SK-N-SH (cell line): ENCODE measurements at regions of chr14 and their contacts with region 1.

Region 1: DNA sequence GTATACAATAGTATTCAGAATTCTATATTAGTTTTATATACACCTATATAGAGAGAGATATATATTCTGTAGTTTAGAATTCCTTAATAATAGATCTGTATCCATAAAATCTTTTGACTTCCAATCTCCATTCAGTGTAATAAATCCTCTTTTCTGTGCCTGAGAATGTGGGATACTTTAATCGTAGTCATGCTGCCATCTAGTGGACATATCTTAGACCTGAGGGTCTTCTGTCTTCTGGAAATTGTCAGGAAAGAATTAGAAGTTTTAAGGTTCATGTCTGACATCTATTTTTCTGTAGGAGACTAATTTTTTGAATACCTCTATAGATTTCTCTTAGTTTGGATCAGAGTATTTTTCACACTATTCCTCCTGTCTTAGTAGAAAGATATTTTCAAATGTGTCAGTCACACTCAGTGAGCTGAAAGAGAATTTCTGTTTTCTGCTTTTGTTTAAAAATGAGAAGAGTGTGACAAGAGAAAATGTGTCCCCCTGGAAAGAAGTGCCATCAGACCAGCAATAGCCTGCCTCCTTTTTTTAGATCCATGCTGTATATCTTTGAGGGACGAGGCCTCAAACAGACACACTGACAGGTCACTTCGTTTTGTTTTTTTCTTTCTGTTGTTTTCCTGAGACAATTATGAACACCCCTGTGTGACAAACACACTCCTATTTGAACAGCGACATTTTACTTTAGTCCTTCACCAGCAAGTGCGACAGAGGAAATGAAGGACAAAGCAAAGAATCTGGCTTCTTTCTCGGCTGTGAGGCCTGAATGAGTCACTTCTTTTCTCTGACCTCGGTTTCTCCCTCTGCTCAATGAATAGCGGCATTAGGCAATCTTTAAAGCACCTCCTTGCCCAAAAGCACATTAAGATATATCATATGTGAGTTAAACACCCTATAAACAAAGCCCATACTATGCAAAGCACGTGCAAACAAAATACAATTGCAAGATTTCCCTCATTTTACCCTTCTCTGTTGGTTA is 96.3 kb downstream of the GALC start:
- DNase-seq: peak; percentile 35
- H3K4me3 ChIP-seq: no peak overlapping the region
- H3K27ac ChIP-seq: no peak overlapping the region
- H3K4me1 ChIP-seq: no peaks in the 10 kb centered on the region; a peak in 1 of 4 replicates
- H3K27me3 ChIP-seq: no peaks in the 10 kb centered on the region
- CTCF ChIP-seq: peak; percentile 84
- EP300 ChIP-seq: no peak
- RAD21 ChIP-seq: peak; percentile 78

Region 2: DNA sequence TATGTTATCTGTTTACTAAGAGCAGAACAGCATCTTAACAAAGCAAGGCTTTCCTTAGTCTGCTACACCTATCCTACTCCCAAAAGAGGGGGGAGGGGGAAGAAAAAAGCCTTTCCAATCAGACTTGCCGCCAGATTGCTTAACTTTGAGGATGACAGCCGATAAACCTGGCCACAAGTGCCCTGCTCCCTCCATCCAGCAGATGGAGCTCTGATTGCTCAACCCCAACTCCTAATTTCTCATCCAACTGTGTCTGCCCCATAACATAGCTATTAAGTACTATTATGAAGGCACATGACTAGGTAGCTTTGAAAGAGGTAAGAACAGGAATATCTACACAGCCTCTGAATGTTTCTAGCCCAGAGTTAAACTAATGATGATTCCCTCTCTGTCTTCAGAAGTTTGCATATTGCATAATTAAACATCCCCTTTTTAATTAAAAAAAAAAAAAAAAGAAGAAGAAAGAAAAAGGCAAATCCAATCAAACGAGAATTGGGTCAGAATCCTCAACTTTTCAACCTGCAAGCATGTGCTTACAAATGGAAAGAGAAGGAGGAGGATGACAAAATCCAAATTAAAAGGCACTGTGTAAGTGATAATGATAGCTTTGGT is 151.1 kb before region 1 on chr14:
- CTCF ChIA-PET with region 1: interaction called, 53 read pairs
- POLR2A ChIA-PET with region 1: no interaction called
- DNase-seq: peak; percentile 52
- H3K4me3 ChIP-seq: no peak overlapping the region
- H3K27ac ChIP-seq: no peak overlapping the region
- H3K4me1 ChIP-seq: no peaks in the 10 kb centered on the region
- H3K27me3 ChIP-seq: no peaks in the 10 kb centered on the region
- CTCF ChIP-seq: peak; percentile 55
- EP300 ChIP-seq: no peak
- RAD21 ChIP-seq: peak; percentile 38

Region 3: GRCh38 chr14:87805315-87805723 is 91.4 kb before region 1 on chr14:
- CTCF ChIA-PET with region 1: interaction called, 69 read pairs
- POLR2A ChIA-PET with region 1: no interaction called
- DNase-seq: peak; percentile 41
- H3K4me3 ChIP-seq: no peak overlapping the region; a peak in 1 of 4 replicates
- H3K27ac ChIP-seq: no peak overlapping the region
- H3K4me1 ChIP-seq: no peaks in the 10 kb centered on the region
- H3K27me3 ChIP-seq: no peaks in the 10 kb centered on the region
- CTCF ChIP-seq: peak; percentile 59
- EP300 ChIP-seq: no peak
- RAD21 ChIP-seq: peak; percentile 51

Region 4: DNA sequence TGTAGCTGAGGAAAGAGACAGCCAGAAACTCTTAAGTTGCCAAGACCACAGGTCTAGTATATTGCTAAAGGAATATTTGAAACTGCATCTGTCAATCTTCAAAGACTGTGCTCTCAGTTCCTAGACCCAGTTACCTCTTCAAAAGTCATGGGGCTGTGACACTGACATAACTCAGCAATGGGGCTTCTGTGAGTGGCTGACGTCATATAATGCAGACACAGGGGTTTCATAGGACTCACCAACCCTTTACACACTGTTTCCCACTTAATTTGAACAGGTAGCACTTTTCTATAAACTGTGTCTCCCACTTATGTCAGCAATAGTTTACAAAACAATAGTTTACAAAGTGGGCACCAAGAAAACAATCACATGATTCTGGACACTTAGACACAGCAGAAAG is 62.1 kb before region 1 on chr14:
- CTCF ChIA-PET with region 1: no interaction called
- POLR2A ChIA-PET with region 1: no interaction called
- DNase-seq: no peak
- H3K4me3 ChIP-seq: no peak overlapping the region
- H3K27ac ChIP-seq: no peak overlapping the region
- H3K4me1 ChIP-seq: no peaks in the 10 kb centered on the region
- H3K27me3 ChIP-seq: no peaks in the 10 kb centered on the region
- CTCF ChIP-seq: no peak
- EP300 ChIP-seq: no peak
- RAD21 ChIP-seq: no peak

Region 5: DNA sequence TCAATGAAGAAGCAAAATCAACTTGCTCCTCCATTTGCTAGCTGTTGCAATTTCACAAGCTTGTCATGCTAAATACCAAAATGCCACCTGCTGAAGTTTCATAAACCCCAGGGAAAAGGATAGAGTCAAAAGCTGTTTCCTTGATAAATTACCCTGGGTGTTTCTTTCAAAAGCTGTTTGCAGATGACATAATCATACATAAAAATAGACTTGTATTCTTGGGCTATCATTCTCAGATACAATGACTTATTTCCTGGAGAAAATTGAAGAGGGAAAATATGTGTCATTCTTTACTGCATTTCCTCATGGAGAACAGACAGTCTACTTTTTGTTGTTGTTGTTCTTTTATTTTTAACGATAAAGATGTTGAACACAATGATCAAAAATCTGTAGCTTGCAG is 22.9 kb before region 1 on chr14:
- CTCF ChIA-PET with region 1: interaction called, 14 read pairs
- POLR2A ChIA-PET with region 1: no interaction called
- DNase-seq: no peak
- H3K4me3 ChIP-seq: no peak overlapping the region
- H3K27ac ChIP-seq: no peak overlapping the region
- H3K4me1 ChIP-seq: no peaks in the 10 kb centered on the region
- H3K27me3 ChIP-seq: no peaks in the 10 kb centered on the region
- CTCF ChIP-seq: no peak
- EP300 ChIP-seq: no peak
- RAD21 ChIP-seq: no peak

Region 6: DNA sequence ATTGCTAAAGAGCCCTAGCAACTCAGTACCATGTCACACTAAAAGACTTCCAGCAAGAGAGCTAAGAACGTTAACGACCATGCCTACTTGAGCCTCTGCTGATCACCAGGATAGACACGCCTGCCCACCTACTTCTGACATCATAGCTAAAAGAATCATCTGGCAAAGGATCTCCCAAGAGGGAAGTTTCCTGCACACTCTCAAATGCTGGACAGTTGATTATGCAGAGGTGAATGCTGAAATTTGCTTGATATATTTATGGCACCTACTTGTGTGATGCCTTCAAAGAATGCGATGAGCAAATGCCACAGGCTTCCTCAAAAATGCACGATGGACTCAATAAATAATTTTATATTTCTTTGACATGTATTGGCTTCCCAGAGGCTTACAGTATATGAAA is 17.3 kb before region 1 on chr14:
- CTCF ChIA-PET with region 1: interaction called, 14 read pairs
- POLR2A ChIA-PET with region 1: no interaction called
- DNase-seq: no peak
- H3K4me3 ChIP-seq: no peak overlapping the region
- H3K27ac ChIP-seq: no peak overlapping the region
- H3K4me1 ChIP-seq: no peaks in the 10 kb centered on the region
- H3K27me3 ChIP-seq: no peaks in the 10 kb centered on the region
- CTCF ChIP-seq: no peak
- EP300 ChIP-seq: no peak
- RAD21 ChIP-seq: no peak

Region 7: DNA sequence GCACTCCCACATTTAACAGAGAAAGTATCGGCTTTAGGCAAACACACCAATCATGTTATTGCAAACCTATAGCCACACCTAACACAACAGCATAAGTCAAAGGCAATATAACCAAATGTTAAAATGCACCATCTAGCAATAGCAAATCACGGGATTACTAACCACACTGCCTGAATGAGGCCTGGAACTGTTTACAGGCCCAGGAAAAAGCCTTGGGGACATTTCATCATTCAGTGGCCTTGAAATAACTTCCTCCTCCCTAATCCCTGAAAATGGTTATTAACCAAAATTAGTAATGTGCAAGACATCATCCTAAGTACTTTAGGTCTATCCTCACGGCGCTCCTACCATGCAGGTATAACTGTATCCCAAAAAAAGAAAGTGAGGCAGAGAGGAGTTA is 94.0 kb after region 1 on chr14:
- CTCF ChIA-PET with region 1: no interaction called
- POLR2A ChIA-PET with region 1: no interaction called
- DNase-seq: no peak
- H3K4me3 ChIP-seq: no peak overlapping the region
- H3K27ac ChIP-seq: no peak overlapping the region
- H3K4me1 ChIP-seq: peaks cover 0 to 7% of the 10 kb centered on the region in 2 experiments; a peak in 1 of 4 replicates
- H3K27me3 ChIP-seq: no peaks in the 10 kb centered on the region
- CTCF ChIP-seq: no peak
- EP300 ChIP-seq: no peak
- RAD21 ChIP-seq: no peak

Region 8: GRCh38 chr14:88492272-88493089 is 595.8 kb after region 1 on chr14:
- CTCF ChIA-PET with region 1: no interaction called
- POLR2A ChIA-PET with region 1: no interaction called
- DNase-seq: peak; percentile 81
- H3K4me3 ChIP-seq: no peak overlapping the region; a peak in 1 of 4 replicates
- H3K27ac ChIP-seq: no peak overlapping the region
- H3K4me1 ChIP-seq: peaks cover 0 to 3% of the 10 kb centered on the region in 2 experiments; a peak in 1 of 4 replicates
- H3K27me3 ChIP-seq: no peaks in the 10 kb centered on the region
- CTCF ChIP-seq: peak; percentile 88
- EP300 ChIP-seq: no peak
- RAD21 ChIP-seq: peak; percentile 80

Region 9: DNA sequence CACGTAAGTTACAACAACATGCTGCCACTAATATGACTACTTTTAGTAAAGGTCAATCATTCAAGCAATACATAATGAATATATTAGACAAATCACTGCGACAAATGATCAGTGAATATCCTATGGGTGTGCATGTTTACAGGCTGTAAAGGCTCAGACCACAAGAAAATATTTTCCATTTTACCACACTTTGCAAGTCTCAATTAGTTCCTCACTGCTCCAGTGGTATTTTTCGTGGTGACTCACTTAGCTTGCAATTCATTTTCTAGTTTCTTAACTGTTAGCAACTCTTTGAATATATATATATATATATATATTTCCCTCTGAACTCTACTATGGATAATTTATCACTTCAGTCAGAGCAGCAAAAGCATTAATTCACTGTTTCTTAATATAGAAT is 799.2 kb after region 1 on chr14:
- CTCF ChIA-PET with region 1: no interaction called
- POLR2A ChIA-PET with region 1: no interaction called
- DNase-seq: no peak
- H3K4me3 ChIP-seq: no peak overlapping the region
- H3K27ac ChIP-seq: no peak overlapping the region
- H3K4me1 ChIP-seq: no peaks in the 10 kb centered on the region; a peak in 1 of 4 replicates
- H3K27me3 ChIP-seq: no peaks in the 10 kb centered on the region
- CTCF ChIP-seq: no peak
- EP300 ChIP-seq: no peak
- RAD21 ChIP-seq: no peak